ENCODE measurements at regions of chr12 and their contacts with region 1.

Region 1: GRCh38 chr12:108966378-108967151 is 54.3 kb downstream of the SVOP start:
- DNase-seq: no peak
- H3K4me3 ChIP-seq: no peak overlapping the region
- H3K27ac ChIP-seq: no peak overlapping the region
- H3K4me1 ChIP-seq: no peaks in the 10 kb centered on the region
- H3K27me3 ChIP-seq: no peaks in the 10 kb centered on the region
- CTCF ChIP-seq: no peak
- EP300 ChIP-seq: no peak
- RAD21 ChIP-seq: no peak

Region 2: GRCh38 chr12:108950991-108951739 is 15.4 kb before region 1 on chr12:
- CTCF ChIA-PET with region 1: interaction called, 10 read pairs
- POLR2A ChIA-PET with region 1: no interaction called
- DNase-seq: peak; percentile 53
- H3K4me3 ChIP-seq: no peak overlapping the region; a peak in 1 of 4 replicates
- H3K27ac ChIP-seq: no peak overlapping the region
- H3K4me1 ChIP-seq: peaks cover 0 to 3% of the 10 kb centered on the region in 2 experiments; a peak in 1 of 4 replicates
- H3K27me3 ChIP-seq: no peaks in the 10 kb centered on the region
- CTCF ChIP-seq: peak; percentile 89
- EP300 ChIP-seq: peak in 1 of 2 experiments; percentile 10; a peak in 1 of 4 replicates
- RAD21 ChIP-seq: peak; percentile 87

Measured in SK-N-SH (cell line).